GM12878 (cell line): ENCODE measurements at regions of chr14 and their contacts with region 1.

Region 1: GRCh38 chr14:87745507-87746118 is 247.4 kb downstream of the GALC start:
- DNase-seq: no peak
- ATAC-seq: peak; percentile 83
- H3K4me3 ChIP-seq: no peak overlapping the region
- H3K27ac ChIP-seq: no peak overlapping the region
- H3K4me1 ChIP-seq: no peaks in the 10 kb centered on the region
- H3K27me3 ChIP-seq: no peaks in the 10 kb centered on the region
- CTCF ChIP-seq: peak; percentile 70 to 83 (median 77)
- EP300 ChIP-seq: no peak
- POLR2A ChIP-seq: no peak
- RAD21 ChIP-seq: peak; percentile 39

Region 2: DNA sequence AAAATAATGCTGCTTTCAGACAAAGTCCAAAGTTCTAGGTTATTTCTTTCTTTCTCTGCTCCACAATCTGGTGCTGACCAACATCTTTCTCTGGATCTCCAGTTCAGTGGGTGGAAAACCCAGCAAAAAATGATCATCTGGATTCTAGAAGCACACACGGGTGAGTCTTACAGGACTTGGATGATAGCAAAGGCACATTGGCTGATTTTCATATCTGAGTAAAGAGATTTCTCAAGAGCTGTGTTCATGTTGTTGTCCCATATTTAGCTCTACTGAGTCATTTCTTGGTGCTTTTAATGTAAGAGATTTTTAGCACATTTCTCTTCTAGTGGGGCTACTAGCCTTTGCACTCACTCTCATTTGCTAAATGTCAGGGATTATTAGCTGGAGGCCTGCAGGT is 89.3 kb before region 1 on chr14:
- CTCF ChIA-PET with region 1: no interaction called
- POLR2A ChIA-PET with region 1: no interaction called
- RAD21 ChIA-PET with region 1: no interaction called
- SMC1A ChIA-PET with region 1: no interaction called
- in situ Hi-C with region 1: no loop called
- intact Hi-C with region 1: no loop called
- DNase-seq: no peak
- ATAC-seq: no peak
- H3K4me3 ChIP-seq: no peak overlapping the region
- H3K27ac ChIP-seq: no peak overlapping the region
- H3K4me1 ChIP-seq: no peaks in the 10 kb centered on the region
- H3K27me3 ChIP-seq: no peaks in the 10 kb centered on the region
- CTCF ChIP-seq: no peak
- EP300 ChIP-seq: no peak
- POLR2A ChIP-seq: no peak
- RAD21 ChIP-seq: no peak

Region 3: DNA sequence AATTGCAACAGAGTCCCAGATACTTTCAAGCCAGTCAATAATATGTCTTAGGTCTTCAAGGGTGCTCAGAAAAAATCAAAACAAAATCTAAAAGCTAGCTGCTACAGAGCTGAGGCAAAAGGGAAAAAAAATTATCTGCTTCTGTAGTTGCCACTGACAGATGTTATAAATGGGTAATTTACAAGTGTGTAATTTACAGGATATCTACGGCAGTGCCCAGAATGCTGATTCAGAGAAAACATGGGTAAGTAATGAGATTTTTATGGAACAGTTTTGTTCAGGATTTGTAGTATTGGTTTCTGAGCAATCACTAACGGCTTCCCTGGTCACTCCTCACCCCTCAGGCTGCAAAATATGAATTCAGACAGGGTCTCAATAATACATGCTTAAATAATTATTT is 13.3 kb after region 1 on chr14:
- CTCF ChIA-PET with region 1: interaction called, 11 read pairs
- POLR2A ChIA-PET with region 1: no interaction called
- RAD21 ChIA-PET with region 1: interaction called, 4 read pairs
- SMC1A ChIA-PET with region 1: interaction called, 6 read pairs
- in situ Hi-C with region 1: no loop called
- intact Hi-C with region 1: no loop called
- DNase-seq: no peak
- ATAC-seq: no peak
- H3K4me3 ChIP-seq: no peak overlapping the region
- H3K27ac ChIP-seq: no peak overlapping the region
- H3K4me1 ChIP-seq: no peaks in the 10 kb centered on the region
- H3K27me3 ChIP-seq: no peaks in the 10 kb centered on the region
- CTCF ChIP-seq: no peak
- EP300 ChIP-seq: no peak
- POLR2A ChIP-seq: no peak
- RAD21 ChIP-seq: no peak

Region 4: DNA sequence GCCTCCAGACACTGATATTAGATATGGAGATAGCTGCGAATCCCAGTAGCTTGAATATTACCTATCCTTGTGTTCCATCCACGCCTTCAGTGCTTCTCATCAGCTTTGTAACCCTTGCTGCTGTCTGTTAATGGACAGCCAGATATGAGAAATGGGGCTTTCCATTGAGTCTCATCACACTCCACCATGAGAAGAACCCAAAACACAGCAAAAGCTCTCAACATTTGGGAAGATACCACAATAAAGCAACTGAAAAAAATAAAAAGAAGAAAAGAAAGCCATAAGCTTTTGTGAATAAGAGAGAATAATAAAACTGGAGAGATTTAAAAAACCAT is 21.9 kb after region 1 on chr14:
- CTCF ChIA-PET with region 1: interaction called, 9 read pairs
- POLR2A ChIA-PET with region 1: no interaction called
- RAD21 ChIA-PET with region 1: interaction called, 10 read pairs
- SMC1A ChIA-PET with region 1: interaction called, 6 read pairs
- in situ Hi-C with region 1: no loop called
- intact Hi-C with region 1: no loop called
- DNase-seq: peak; percentile 11
- ATAC-seq: peak; percentile 74
- H3K4me3 ChIP-seq: no peak overlapping the region
- H3K27ac ChIP-seq: no peak overlapping the region
- H3K4me1 ChIP-seq: no peaks in the 10 kb centered on the region
- H3K27me3 ChIP-seq: no peaks in the 10 kb centered on the region
- CTCF ChIP-seq: no peak
- EP300 ChIP-seq: no peak
- POLR2A ChIP-seq: no peak
- RAD21 ChIP-seq: no peak

Region 5: GRCh38 chr14:87805315-87805723 is 59.7 kb after region 1 on chr14:
- CTCF ChIA-PET with region 1: interaction called, 26 read pairs
- POLR2A ChIA-PET with region 1: no interaction called
- RAD21 ChIA-PET with region 1: no interaction called
- SMC1A ChIA-PET with region 1: no interaction called
- in situ Hi-C with region 1: no loop called
- intact Hi-C with region 1: no loop called
- DNase-seq: no peak
- ATAC-seq: peak; percentile 74
- H3K4me3 ChIP-seq: no peak overlapping the region
- H3K27ac ChIP-seq: no peak overlapping the region
- H3K4me1 ChIP-seq: no peaks in the 10 kb centered on the region
- H3K27me3 ChIP-seq: no peaks in the 10 kb centered on the region
- CTCF ChIP-seq: peak; percentile 36 to 72 (median 63)
- EP300 ChIP-seq: no peak
- POLR2A ChIP-seq: no peak
- RAD21 ChIP-seq: peak; percentile 42

Region 6: DNA sequence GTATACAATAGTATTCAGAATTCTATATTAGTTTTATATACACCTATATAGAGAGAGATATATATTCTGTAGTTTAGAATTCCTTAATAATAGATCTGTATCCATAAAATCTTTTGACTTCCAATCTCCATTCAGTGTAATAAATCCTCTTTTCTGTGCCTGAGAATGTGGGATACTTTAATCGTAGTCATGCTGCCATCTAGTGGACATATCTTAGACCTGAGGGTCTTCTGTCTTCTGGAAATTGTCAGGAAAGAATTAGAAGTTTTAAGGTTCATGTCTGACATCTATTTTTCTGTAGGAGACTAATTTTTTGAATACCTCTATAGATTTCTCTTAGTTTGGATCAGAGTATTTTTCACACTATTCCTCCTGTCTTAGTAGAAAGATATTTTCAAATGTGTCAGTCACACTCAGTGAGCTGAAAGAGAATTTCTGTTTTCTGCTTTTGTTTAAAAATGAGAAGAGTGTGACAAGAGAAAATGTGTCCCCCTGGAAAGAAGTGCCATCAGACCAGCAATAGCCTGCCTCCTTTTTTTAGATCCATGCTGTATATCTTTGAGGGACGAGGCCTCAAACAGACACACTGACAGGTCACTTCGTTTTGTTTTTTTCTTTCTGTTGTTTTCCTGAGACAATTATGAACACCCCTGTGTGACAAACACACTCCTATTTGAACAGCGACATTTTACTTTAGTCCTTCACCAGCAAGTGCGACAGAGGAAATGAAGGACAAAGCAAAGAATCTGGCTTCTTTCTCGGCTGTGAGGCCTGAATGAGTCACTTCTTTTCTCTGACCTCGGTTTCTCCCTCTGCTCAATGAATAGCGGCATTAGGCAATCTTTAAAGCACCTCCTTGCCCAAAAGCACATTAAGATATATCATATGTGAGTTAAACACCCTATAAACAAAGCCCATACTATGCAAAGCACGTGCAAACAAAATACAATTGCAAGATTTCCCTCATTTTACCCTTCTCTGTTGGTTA is 151.1 kb after region 1 on chr14:
- CTCF ChIA-PET with region 1: interaction called, 119 read pairs
- POLR2A ChIA-PET with region 1: no interaction called
- RAD21 ChIA-PET with region 1: interaction called, 9 read pairs
- SMC1A ChIA-PET with region 1: interaction called, 38 read pairs
- in situ Hi-C with region 1: loop called (anchors 5 kb)
- intact Hi-C with region 1: loop called (anchors 1 kb)
- DNase-seq: no peak
- ATAC-seq: peak; percentile 77
- H3K4me3 ChIP-seq: no peak overlapping the region
- H3K27ac ChIP-seq: no peak overlapping the region
- H3K4me1 ChIP-seq: no peaks in the 10 kb centered on the region
- H3K27me3 ChIP-seq: no peaks in the 10 kb centered on the region
- CTCF ChIP-seq: peak; percentile 30 to 70 (median 61); a peak in 5 of 6 replicates
- EP300 ChIP-seq: no peak
- POLR2A ChIP-seq: no peak
- RAD21 ChIP-seq: peak; percentile 80